ENCODE measurements at regions of chr9 and their contacts with region 1.

Region 1: GRCh38 chr9:109903515-109904138 is 123.6 kb downstream of the PALM2AKAP2 start:
- DNase-seq: peak; percentile 79
- H3K4me3 ChIP-seq: no peak overlapping the region
- H3K27ac ChIP-seq: no peak overlapping the region
- H3K4me1 ChIP-seq: no peaks in the 10 kb centered on the region
- H3K27me3 ChIP-seq: no peaks in the 10 kb centered on the region
- CTCF ChIP-seq: peak; percentile 89

Region 2: GRCh38 chr9:109198736-109199379 is 704.8 kb before region 1 on chr9:
- CTCF ChIA-PET with region 1: no interaction called
- POLR2A ChIA-PET with region 1: no interaction called
- intact Hi-C with region 1: no loop called
- DNase-seq: no peak
- H3K4me3 ChIP-seq: no peak overlapping the region
- H3K27ac ChIP-seq: no peak overlapping the region
- H3K4me1 ChIP-seq: no peaks in the 10 kb centered on the region
- H3K27me3 ChIP-seq: peaks cover 3% of the 10 kb centered on the region
- CTCF ChIP-seq: 0 out of 2 replicates have a peak, but pooled peaks have one; percentile 18

Region 3: DNA sequence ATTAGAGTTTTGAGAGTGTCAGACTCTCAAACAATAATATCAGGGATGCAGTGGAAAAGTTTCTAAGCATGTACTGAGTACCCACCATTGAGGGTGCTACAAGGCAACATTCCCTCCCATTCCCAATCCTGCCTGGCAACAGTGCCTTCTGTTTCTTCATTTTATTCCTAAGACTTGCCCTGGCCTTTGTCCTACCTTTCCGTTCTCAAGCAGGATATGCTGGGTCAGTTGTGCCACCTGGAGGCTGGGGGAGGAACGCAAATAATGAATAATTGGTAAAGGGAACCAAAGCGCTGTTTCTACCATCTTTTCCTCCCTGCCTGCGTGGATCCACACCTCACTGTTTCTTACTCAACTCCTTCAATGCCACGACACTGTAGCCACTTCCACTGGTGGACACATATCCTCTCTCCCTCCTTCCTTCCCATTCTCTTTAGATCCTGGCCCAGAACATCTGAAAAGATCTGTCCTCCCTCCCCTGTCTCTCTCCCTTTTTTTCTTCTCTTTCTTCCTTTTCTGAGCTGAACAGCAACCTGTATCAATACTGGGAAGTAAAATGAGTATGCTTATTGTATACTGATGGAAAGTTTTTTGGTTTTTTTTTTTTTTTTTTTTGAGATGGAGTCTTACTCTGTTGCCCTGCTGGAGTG is 154.8 kb after region 1 on chr9:
- CTCF ChIA-PET with region 1: interaction called, 3 read pairs
- POLR2A ChIA-PET with region 1: no interaction called
- intact Hi-C with region 1: loop called (anchors 1 kb)
- DNase-seq: peak; percentile 65
- H3K4me3 ChIP-seq: no peak overlapping the region
- H3K27ac ChIP-seq: no peak overlapping the region
- H3K4me1 ChIP-seq: no peaks in the 10 kb centered on the region
- H3K27me3 ChIP-seq: no peaks in the 10 kb centered on the region
- CTCF ChIP-seq: peak; percentile 57

Region 4: GRCh38 chr9:110152704-110153374 is 249.2 kb after region 1 on chr9:
- CTCF ChIA-PET with region 1: interaction called, 11 read pairs
- POLR2A ChIA-PET with region 1: no interaction called
- intact Hi-C with region 1: loop called (anchors 1 kb)
- DNase-seq: peak; percentile 74
- H3K4me3 ChIP-seq: no peak overlapping the region
- H3K27ac ChIP-seq: no peak overlapping the region
- H3K4me1 ChIP-seq: no peaks in the 10 kb centered on the region
- H3K27me3 ChIP-seq: no peaks in the 10 kb centered on the region
- CTCF ChIP-seq: peak; percentile 79

Region 5: GRCh38 chr9:110217656-110218099 is 314.1 kb after region 1 on chr9:
- CTCF ChIA-PET with region 1: no interaction called
- POLR2A ChIA-PET with region 1: no interaction called
- intact Hi-C with region 1: loop called (anchors 5 kb)
- DNase-seq: peak; percentile 38
- H3K4me3 ChIP-seq: no peak overlapping the region
- H3K27ac ChIP-seq: no peak overlapping the region
- H3K4me1 ChIP-seq: no peaks in the 10 kb centered on the region
- H3K27me3 ChIP-seq: peaks cover 4% of the 10 kb centered on the region
- CTCF ChIP-seq: peak; percentile 78